AG04450 (cell line): ENCODE measurements at regions of chr20 and their contacts with region 1.

Region 1: DNA sequence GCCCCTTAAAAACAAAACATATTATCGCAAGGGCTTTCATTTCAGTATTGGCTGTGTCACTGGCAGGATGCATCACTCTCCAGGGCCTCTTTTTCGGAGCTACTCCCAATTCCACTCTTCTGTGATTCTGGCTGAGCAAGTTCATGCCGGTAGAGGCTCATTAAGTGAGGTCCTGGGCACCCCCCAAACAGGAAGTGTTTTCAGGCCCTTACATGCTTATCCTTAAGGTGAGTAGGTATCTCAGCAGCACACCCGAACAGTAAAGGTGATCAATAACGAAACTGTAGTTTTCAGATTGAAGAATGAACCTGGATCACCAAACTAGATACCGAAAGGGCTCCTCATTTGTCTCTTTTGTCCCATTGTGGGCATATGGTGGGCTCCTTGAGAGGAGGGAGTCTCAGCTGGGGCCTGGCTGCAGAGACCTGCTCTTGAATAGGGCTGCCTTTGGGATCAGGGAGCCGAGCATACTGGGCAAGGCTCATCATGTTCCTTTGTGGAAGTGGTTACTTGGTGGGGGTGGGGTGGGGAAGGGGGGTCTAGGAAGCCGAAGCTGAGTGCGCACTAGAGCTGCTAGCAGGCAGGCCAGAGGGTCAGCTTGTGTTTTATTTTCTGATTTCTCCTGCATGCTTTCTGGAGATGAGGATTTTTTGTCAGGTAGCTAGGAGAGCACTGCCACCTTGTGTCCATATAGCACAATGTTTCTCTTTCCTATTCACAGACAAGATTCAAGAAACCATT is 65.2 kb downstream of the CDS2 start:
- DNase-seq: peak; percentile 57
- H3K4me3 ChIP-seq: no peak overlapping the region
- H3K27ac ChIP-seq: no peak overlapping the region
- H3K27me3 ChIP-seq: no peaks in the 10 kb centered on the region
- CTCF ChIP-seq: peak; percentile 76

Region 2: DNA sequence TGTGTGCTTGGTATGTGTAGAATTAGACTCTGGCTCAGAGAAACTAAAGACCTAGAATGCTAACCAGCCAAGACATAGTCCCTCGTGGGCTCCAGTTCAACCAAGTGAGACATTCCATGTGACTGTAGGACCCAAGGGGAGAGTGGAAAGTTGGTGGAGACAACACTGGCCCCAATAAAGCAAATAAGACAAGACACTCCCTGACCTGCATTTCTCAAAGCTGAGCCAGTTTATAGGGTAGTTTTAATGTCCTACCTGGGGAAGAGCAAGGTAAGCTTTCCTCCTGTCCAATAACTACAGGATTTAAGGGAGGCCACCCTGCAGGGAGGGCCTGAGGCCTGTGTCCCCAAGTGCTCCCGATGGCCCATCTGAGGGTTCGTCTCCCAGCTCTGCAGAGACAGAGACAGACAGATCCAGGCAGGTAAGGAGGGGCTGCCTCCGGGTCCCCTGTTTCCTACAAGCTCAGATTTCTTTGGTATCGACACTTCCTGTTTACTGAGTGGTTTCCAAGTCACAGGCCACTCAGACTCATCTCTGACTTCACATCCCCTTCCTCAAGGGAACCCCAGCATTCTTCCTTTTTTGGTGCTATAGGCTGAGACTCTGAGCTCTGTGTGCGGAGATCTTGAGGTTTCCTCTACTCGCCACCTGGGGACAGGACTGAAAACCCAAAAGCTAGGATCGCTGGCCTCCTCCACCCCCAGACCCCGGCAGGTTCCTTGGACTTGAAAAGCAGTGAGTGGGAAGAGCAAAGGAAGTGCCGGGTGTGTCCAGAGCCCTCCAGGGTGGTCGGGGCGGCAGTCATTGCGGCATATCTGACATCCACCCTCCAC is 377.9 kb before region 1 on chr20:
- CTCF ChIA-PET with region 1: no interaction called
- POLR2A ChIA-PET with region 1: no interaction called
- DNase-seq: no peak
- H3K4me3 ChIP-seq: no peak overlapping the region
- H3K27ac ChIP-seq: no peak overlapping the region
- H3K27me3 ChIP-seq: peaks cover 15% of the 10 kb centered on the region
- CTCF ChIP-seq: no peak

Region 3: DNA sequence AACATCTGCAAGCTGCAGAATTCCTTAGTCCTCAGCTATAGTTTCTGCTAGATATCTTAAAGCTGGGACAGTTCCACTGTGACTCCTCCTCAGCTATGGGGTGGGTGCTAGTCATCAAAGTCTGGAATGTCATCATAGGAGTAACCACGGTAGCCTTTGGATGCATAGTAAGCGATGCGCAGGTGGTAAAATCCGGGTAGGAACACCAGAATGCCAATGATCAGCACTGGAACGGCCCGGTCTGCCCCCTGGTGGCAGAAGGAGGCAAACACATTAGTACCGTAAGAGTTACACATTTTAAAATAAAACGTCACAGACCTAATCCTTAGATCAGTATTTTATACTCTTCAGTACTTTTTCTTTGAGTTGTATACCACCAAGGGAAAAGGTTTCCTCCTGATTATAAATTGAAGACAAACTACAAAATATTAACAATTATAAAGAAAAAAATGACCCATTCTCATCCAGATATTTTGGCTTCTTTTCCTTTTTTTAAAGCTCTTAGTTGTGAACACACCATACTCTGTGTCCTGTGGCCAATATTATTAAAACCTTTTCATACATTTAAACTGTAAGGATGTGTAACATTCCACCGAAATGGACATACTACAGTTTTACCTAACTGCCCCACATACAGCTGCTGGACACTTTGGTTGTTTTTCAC is 91.2 kb before region 1 on chr20:
- CTCF ChIA-PET with region 1: interaction called, 15 read pairs
- POLR2A ChIA-PET with region 1: no interaction called
- DNase-seq: no peak
- H3K4me3 ChIP-seq: no peak overlapping the region
- H3K27ac ChIP-seq: no peak overlapping the region
- H3K27me3 ChIP-seq: no peaks in the 10 kb centered on the region
- CTCF ChIP-seq: peak; percentile 79

Region 4: GRCh38 chr20:5126512-5127203 is 65.3 kb before region 1 on chr20 and contains the start of gene CDS2:
- CTCF ChIA-PET with region 1: interaction called, 284 read pairs
- POLR2A ChIA-PET with region 1: interaction called, 29 read pairs
- DNase-seq: peak; percentile 97
- H3K4me3 ChIP-seq: peak within 1 kb of the TSS; percentile 80
- H3K27ac ChIP-seq: peak within 1 kb of the TSS; percentile 39
- H3K27me3 ChIP-seq: no peaks in the 10 kb centered on the region
- CTCF ChIP-seq: peak; percentile 49
- polyA plus RNA-seq, gene CDS2: 43.5 and 48.7 TPM in 2 replicates

Region 5: DNA sequence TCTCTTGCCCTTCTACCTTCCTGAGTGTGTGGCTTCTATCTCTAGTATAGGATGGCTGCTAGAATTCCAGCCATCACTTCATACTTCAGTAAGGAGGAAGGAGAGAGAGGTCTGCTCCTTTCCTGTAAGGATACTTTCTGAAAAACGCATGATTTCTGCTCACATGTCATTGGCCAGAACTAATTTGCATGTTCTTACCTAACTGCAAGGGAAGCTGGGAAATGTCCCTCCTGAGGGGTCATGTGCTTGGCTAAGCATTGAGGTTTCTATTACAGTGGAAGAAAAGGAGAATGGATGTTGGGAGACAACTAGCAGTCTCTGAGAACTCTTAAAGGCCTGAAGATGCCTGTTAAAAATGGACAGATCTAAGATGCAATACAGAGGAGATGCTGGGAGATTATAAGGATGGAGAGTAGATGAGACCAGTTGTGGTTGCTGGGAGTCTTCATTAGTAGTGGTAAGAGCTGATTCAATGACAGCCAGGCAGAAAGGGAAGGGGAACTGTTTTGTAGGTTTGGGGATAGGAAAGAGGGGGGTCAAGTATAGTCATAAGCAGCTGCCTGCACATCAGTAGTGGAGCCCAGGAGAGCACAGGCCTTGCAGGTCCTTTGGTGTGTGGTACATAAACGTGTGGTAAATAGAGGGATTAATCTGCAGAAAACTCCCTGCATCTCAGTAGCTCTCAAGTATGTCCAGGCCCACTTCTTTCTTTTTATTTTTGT is 45.0 kb before region 1 on chr20:
- CTCF ChIA-PET with region 1: interaction called, 11 read pairs
- POLR2A ChIA-PET with region 1: no interaction called
- DNase-seq: no peak
- H3K4me3 ChIP-seq: no peak overlapping the region
- H3K27ac ChIP-seq: no peak overlapping the region
- H3K27me3 ChIP-seq: no peaks in the 10 kb centered on the region
- CTCF ChIP-seq: no peak

Region 6: DNA sequence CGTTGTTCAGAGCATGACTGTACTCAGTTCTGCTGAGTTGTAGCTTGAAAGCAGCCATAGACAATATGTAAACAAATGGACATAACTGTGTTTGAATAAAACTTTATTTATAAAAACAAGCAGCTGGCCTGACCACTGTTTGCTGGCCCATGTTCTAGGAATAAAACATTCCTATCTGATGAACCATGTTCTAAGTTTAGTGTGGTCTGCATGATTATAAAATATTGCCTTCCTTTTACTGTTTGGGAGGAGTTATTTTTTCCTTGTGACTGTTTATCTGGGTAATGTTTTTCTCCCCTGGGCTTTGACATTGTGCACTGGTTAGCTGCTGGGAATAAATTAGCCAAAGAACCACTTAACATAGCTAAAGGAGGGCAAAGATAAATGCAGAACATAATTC is 10.0 kb before region 1 on chr20:
- CTCF ChIA-PET with region 1: interaction called, 29 read pairs
- POLR2A ChIA-PET with region 1: no interaction called
- DNase-seq: peak; percentile 43
- H3K4me3 ChIP-seq: no peak overlapping the region
- H3K27ac ChIP-seq: no peak overlapping the region
- H3K27me3 ChIP-seq: no peaks in the 10 kb centered on the region
- CTCF ChIP-seq: no peak

Region 7: DNA sequence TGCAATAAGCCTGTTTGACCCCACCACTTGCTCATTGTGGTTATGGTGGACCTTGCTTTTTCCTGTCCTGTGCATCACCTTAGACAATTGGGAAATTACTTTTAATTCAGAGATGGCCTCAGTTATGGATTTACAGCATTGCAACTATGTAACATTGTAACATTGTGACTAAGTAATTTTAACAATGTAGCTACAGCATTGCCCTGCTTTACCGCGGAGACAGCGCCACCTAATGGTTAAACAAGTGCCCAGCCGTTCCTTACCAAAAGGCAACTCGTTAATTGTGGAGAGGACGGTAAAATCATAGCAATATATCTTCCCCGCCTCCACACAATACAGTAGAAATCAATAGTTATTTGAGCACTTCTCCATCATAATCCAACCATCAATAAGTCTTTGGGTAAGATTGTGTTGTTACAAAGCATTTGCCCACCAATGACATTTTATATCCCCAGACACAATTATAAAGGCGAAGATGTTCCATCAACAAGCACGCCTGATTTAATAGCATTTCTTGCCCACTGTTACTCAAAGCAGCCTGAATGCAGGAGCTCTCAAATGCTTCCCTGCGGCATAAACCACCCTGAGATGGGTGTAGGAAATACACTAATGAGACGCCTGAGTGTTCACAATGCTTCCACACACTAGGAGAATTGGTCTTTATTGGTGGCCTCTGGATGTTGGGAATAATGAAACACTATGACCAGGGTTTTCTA is 31.1 kb after region 1 on chr20:
- CTCF ChIA-PET with region 1: interaction called, 14 read pairs
- POLR2A ChIA-PET with region 1: interaction called, 3 read pairs
- DNase-seq: peak; percentile 30
- H3K4me3 ChIP-seq: no peak overlapping the region
- H3K27ac ChIP-seq: no peak overlapping the region
- H3K27me3 ChIP-seq: no peaks in the 10 kb centered on the region
- CTCF ChIP-seq: peak; percentile 96

Region 8: GRCh38 chr20:5268449-5268848 is 76.5 kb after region 1 on chr20:
- CTCF ChIA-PET with region 1: no interaction called
- POLR2A ChIA-PET with region 1: no interaction called
- DNase-seq: no peak
- H3K4me3 ChIP-seq: no peak overlapping the region
- H3K27ac ChIP-seq: no peak overlapping the region
- H3K27me3 ChIP-seq: peaks cover 3% of the 10 kb centered on the region
- CTCF ChIP-seq: no peak